GM13976 (cell line): ENCODE measurements at regions of chr17 and their contacts with region 1.

Region 1: DNA sequence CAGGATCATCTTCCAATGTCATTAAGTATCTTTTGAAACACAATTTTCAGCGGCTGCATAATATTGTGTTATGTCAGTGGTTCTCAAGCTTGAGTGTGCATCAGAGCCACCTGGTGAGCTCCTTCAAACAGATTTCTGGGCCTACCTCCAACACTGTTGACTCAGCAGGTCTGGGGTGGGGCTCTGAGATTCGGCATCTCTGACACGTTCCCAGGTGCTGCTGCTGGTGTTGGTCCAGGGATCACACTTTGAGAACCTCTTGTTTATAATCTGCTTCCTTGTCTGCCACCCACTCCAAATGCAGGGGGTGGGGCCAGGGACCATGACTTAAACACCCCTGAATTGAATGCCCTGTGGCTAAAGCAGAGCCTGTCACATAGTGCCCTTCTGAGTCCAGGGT is 73.8 kb upstream of the HNF1B start:
- DNase-seq: no peak
- CTCF ChIP-seq: no peak

Region 2: GRCh38 chr17:37527249-37527851 is 291.3 kb before region 1 on chr17:
- in situ Hi-C with region 1: loop called (anchors 10 kb)
- DNase-seq: peak; percentile 53
- CTCF ChIP-seq: peak; percentile 50

Region 3: DNA sequence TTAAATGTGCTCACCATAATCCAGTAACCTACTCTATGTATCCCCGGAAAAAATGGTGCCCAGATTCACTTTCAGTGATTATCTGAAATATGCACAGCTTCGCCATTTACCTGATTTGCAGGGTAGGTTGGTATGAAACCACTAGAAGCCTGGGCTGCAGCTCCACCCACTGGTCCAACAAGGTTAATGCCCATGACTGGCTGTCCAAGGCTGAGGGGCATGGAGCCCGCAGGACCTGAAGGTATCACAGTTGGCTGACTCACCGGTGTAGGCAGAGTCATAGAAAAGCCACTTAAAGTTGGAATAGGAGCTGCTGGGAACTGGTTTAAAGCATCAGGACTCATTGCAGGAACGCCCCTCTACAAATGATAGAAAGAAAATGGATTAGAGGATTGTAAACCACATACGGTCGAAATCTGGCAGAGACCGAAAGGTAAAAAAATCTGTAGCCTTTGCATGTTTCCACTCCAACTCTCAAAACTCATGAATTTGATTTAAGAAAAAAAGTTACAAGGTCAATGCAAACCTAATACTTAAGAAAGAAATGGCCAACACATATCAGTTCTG is 248.1 kb before region 1 on chr17:
- in situ Hi-C with region 1: no loop called
- DNase-seq: peak; percentile 43
- CTCF ChIP-seq: no peak

Region 4: DNA sequence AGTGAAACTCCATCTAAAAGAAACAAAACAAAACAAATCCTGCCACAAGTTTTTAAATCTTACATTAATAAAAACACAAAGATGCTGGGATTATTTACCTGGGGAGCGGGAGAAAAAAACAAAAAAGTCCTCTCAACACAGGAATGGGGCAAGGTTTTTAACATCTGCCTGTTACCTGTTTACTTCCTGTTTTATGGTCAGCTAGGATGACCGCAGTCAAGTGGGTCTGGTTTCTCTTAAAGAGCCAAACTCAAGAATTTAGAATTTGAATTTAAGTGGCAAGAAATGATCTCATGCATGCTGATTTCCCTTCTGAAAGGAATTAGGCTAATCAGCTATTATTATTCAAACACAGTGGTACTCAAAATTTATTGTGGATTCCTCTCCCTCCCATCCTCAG is 65.8 kb after region 1 on chr17:
- in situ Hi-C with region 1: no loop called
- DNase-seq: no peak
- CTCF ChIP-seq: no peak